Activated T-helper 1 cell treated with anti-CD3 and anti-CD28 coated beads, Interleukin-12 subunit alpha, Interleukin-12 subunit beta, Interleukin-2, Interleukin-4 antibody, amounts not matched to agents 30 ng/mL and 10 ng/mL and 1 ng/mL, durations not matched to agents 14 hours and 24 hours and 36 hours (primary cell): ENCODE measurements at regions of chr20 and their contacts with region 1.

Region 1: DNA sequence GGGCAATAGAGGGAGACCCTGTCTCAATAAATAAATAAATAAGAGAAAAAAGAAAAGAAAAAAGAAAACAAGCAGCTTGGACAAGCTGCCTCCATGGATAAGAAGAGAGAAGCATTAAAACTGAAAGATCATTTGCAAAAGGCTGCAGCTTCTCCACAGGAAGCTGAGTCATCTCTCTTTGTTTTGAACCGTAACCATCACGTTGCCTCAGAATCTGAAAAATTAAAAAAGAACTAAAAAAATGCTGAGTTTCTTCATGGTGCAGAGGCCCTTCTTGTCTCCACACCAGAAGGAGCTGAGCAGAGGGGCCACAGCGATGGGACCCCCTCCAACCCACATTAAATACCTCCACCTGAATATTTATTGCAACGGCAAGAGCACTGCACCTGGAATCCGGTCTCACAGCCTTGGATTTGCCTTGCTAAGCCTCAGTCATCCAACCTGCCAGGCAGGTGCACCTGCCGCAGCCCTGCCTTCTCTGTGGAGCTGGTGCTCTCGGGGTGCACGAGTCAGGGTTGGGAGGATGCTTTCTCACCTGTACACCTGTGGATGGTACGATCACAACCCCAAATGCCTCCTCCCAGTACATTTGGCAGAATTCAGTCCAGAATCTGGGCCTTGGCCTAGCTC is 28.1 kb downstream of the TOX2 start:
- DNase-seq: peak; percentile 33
- H3K4me3 Mint-ChIP-seq: peak overlapping the region; percentile 70
- H3K27ac Mint-ChIP-seq: peak overlapping the region; percentile 88
- H3K4me1 Mint-ChIP-seq: peaks cover 75% of the 10 kb centered on the region
- H3K27me3 Mint-ChIP-seq: peaks cover 14% of the 10 kb centered on the region

Region 2: DNA sequence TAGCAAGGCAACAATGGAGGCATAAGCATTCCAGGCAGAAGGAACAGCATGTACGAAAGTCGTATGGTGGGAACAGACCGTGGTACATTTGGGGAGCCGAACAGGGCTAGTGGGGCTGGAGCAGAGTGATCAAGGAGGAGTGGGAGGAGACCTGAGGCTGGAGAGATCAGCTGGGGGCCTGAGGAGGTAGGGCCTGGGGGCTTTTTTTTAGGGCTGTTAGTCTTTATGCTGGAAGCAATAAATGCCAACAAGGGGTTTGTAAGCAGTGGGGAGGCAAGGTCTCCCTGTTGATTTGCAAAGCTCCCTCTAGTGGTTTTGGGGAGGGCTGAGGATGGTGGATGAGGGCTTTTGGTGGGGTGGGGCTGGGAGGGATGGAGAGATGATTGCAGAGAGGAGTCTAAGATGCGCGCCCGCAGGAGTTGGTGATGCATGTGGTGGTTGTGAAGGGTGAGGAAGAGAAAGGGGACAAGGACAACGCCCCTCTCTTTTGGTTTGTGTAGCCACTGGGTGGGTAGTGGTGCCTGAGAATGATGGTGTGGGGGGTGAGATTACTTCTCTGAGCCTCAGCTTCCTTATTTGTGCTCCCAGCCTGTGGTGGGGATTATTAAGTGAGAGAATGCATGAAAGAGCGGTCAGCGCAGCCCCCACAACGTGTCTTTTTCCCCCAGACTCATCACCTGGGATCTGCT is 102.2 kb before region 1 on chr20:
- intact Hi-C with region 1: no loop called
- DNase-seq: peak; percentile 17
- H3K4me3 Mint-ChIP-seq: no peak overlapping the region
- H3K27ac Mint-ChIP-seq: peak overlapping the region; percentile 85
- H3K4me1 Mint-ChIP-seq: peaks cover 59% of the 10 kb centered on the region
- H3K27me3 Mint-ChIP-seq: peaks cover 7% of the 10 kb centered on the region

Region 3: DNA sequence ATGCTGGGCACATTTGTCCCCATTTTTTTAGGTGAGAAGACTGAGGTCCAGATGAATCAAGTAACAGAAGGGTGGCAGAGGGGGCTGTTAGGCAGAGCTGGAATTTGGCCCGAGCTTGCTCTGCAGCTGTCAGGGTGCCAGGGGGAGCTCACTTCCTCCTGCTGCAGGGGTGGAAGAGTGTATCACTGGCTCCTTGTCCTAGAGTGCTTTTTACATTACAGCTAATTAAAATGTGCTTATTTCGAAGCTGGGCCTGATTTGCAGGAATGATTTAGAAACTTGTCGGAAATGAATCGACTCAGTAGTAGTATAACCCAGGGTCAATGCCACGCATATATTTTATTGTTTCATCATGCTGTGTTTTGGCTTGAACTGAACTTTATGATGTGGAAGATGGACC is 17.0 kb before region 1 on chr20:
- intact Hi-C with region 1: loop called (anchors 1 kb)
- DNase-seq: no peak
- H3K4me3 Mint-ChIP-seq: peak overlapping the region; percentile 56
- H3K27ac Mint-ChIP-seq: peak overlapping the region; percentile 70
- H3K4me1 Mint-ChIP-seq: peaks cover 61% of the 10 kb centered on the region
- H3K27me3 Mint-ChIP-seq: peaks cover 21% of the 10 kb centered on the region

Region 4: GRCh38 chr20:44069203-44070011 is 126.6 kb after region 1 on chr20:
- intact Hi-C with region 1: no loop called
- DNase-seq: peak; percentile 65
- H3K4me3 Mint-ChIP-seq: peak overlapping the region; percentile 52
- H3K27ac Mint-ChIP-seq: peak overlapping the region; percentile 87
- H3K4me1 Mint-ChIP-seq: peaks cover 69% of the 10 kb centered on the region
- H3K27me3 Mint-ChIP-seq: peaks cover 4% of the 10 kb centered on the region

Region 5: DNA sequence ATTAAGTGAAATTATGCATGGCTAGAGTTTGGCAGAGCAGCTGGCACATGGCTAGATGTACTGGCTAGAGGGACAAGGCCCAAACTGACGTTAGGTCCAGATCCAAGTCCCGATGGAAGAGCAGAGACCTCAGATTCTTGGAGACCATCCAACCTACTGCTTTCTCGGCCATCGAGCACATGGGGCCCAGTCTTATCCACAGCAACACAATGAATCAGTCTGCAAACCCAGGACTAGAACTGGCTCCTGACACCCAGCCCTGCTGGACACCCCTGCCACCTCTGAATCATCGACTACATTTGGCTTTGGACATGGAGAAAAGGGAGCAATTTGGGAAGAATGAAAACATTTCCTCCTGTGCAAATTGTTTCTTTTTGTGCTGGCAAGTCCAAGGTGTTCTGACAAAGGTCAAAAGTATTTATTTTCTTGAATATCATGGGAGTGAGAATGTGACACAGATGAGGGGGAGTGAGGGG is 918.8 kb after region 1 on chr20:
- intact Hi-C with region 1: no loop called
- DNase-seq: no peak
- H3K4me3 Mint-ChIP-seq: no peak overlapping the region
- H3K27ac Mint-ChIP-seq: no peak overlapping the region
- H3K4me1 Mint-ChIP-seq: peaks cover 8% of the 10 kb centered on the region
- H3K27me3 Mint-ChIP-seq: peaks cover 2% of the 10 kb centered on the region